Activated B cell treated with CpG ODN at 0.5 μM for 24 hours (primary cell): ENCODE measurements at regions of chr4 and their contacts with region 1.

Region 1: DNA sequence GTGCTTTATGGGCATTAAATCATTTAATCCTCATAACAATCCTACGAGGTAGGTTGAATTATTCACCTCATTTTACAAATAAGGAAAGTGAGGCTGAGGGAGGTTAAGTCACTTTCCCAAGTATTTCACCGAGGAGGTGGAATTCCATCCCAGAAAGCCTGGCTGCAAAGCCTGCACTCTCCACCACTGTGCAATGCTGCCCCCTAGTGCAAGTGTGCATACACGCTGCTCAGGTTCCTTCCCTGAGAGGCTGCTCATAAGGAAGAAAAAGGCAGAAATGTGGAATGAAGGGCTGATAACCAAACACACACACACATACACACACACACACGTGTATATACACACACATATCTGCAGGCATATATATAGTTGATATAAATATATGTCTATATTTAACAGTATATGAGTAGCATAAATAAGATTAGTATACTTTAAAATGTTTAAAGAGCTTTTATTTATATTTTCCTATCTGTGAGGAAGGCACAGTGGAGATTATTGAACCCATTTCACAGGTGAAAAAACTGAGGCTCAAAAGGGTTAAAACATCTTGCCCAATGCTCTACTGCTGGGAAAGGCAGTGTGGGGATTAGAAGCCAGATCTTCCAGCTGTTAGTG is 714.5 kb upstream of the TENM3 start:
- DNase-seq: no peak
- ATAC-seq: no peak
- H3K4me3 Mint-ChIP-seq: no peak overlapping the region
- H3K27ac Mint-ChIP-seq: no peak overlapping the region
- H3K4me1 Mint-ChIP-seq: no peaks in the 10 kb centered on the region
- H3K27me3 Mint-ChIP-seq: no peaks in the 10 kb centered on the region
- CTCF ChIP-seq: no peak

Region 2: DNA sequence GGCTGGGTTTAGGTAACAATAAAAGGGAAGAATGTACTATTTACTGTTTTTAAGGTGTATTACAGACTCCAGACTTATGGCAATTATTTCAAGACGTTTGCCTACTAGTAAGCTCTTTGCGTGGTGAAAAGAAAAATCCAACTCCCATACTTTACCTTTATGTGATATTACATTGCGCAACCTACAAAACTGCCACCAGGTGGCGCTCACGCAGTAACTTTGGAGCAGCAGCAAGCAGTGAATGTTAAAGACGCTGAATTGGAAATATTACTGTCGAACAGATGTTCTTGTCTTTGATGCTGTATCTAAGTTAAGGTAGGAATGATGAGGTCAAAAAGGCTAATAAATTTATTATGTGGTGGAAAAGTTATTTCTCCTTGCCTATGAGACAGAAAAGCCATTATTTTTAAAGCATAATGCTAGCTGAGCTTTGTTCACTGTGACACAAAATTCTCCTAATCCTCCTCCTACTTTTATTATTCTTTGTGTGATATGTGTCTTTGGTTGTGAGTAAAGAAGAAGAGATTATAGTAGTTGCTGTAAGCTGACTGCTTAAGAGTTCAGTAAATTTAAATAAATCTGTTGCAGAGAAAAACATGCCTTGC is 385.3 kb before region 1 on chr4:
- CTCF ChIA-PET with region 1: interaction called, 6 read pairs
- POLR2A ChIA-PET with region 1: no interaction called
- intact Hi-C with region 1: loop called (anchors 1 kb)
- DNase-seq: peak; percentile 38
- ATAC-seq: peak; percentile 50
- H3K4me3 Mint-ChIP-seq: no peak overlapping the region
- H3K27ac Mint-ChIP-seq: no peak overlapping the region
- H3K4me1 Mint-ChIP-seq: no peaks in the 10 kb centered on the region
- H3K27me3 Mint-ChIP-seq: no peaks in the 10 kb centered on the region
- CTCF ChIP-seq: peak; percentile 29